KBM-7 (cell line): ENCODE measurements at regions of chr5 and their contacts with region 1.

Region 1: DNA sequence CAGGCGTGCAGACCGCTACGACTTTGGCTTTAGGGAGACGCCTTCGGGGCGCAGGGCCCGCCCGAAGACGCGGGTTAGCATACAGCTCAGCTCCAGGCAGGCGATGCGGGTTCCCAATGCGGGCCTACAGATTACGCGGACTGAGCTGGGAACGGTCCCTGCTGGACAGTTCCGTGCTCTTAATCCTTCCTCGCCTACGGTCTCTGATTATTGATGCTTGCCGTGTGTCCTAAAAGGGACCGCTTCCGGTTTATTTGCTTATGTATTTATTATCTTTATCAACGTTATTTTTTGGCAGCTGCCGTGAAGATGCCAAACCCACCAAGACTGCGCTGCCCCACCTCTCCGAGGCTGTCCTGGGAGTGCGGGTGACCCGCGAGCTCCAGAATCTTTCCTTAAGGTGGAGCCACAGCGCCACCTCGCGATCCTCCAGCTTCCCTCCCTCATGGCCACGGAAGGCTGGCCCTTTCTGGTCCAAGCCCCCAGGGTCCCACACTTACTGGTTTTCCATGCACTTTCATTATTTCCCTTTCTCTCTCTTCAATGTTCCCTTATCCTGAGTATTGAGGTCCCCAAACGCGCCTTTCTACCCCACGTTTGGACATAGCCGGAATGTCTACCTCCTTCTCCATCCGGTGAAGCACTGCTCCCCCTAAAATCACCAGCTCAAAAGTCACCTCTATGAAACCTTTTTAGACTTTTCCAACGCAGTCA is 7.0 kb upstream of the EBF1 start:
- DNase-seq: peak; percentile 80

Region 2: DNA sequence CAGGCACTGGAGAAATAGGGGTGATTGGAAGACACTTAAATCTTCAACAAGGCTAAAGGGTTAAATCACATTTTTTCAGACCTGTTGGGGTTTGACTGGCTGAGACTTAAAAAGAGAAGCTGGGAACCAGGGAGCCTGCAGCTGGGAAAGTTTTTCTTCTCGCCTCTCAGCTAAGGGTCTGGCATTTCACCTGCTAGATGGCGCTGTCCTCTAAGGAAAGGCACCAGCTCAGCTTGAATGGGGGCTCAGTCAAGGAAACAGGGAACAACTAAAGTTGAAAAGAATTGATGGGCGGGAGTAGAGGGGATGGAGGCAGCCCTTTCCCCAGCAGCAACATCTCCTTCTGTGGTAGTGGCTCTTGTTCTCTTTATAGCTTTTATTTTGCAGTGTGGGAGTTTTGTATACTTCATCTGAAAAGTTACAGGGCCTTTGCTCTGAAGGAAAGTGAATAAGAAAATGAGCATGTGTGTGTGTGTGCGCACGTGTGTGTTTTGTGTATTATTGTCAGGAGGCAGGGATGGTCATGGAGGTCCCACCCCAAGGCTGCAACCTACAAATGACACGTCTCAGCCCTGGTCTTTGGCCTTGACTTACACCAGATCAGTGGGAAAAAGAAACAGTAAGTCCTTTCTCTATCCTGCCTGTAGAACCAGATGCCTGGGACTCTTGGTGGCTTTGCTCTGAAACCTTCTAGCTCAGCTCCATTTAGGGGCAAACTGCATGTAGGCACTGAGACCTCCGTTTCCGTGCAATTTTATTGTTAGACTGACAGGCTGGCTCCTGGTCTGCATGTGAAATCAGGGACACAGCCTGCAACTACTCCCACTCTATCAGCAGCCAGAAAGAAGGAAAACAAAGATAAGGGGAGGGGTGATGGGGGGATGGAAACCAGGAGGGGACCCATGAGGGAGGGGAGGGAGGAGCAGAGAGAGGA is 931.5 kb before region 1 on chr5:
- in situ Hi-C with region 1: loop called (anchors 25 kb)
- DNase-seq: peak; percentile 72

Region 3: DNA sequence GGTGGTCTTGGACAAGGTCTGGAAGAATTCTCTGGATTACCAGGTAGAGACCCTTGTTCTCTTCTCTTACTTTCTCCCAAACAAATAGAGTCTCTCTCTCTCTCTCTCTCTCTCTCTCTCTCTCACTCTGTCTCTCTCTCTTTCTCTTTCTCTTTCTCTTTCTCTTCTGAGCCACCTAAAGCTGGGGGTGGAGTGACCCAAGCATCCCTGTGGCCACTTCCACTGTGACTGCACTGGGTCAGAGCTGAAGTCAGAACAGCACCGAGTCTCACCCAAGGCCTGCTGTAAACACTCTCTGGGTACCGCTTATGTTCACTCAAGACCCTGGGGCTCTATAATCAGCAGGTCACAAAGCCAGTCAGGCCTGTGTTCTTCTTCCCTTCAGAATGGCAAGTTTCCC is 520.7 kb before region 1 on chr5:
- in situ Hi-C with region 1: no loop called
- DNase-seq: no peak

Region 4: DNA sequence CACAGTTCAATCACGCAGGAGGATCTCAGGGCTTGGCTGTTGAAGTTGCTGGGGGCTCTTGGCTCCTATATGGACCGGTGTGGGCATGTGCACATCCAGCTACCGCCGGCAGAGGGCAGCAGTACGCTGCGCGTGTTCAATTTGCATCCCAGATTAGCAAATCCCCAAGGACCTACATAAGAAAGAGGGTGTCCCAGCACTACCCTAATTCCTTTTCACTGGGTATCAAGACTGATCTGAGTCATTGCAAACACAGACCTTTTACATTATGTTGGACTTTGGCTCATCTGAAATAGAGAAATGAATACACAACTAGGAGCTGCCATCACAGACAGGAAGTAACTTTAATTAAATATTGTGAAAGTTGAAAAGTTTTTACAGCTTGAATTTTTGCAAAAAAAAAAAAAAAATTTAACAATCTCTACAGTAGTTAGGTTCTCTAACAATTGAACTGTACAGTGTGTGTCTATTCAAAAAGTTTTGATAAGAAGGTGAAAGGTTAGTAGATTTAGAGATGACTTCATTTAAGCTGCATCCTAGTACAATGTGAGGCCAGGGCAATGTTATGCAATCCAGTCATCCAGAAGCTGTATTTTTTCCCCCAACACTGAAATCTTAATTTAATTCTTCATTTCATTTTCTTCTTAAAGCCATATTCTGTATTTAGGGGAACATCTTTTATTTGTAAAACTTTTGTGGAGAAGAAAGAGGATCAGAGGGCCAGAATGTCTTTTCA is 411.0 kb before region 1 on chr5:
- in situ Hi-C with region 1: loop called (anchors 25 kb)
- DNase-seq: peak; percentile 83